A673 (cell line): ENCODE measurements at regions of chr4 and their contacts with region 1.

Region 1: GRCh38 chr4:174340714-174341113 is 57.0 kb downstream of the CEP44 start:
- DNase-seq: no peak
- H3K4me3 ChIP-seq: no peak overlapping the region
- H3K27ac ChIP-seq: peak overlapping the region; percentile 79
- H3K4me1 ChIP-seq: peaks cover 8% of the 10 kb centered on the region
- H3K27me3 ChIP-seq: no peaks in the 10 kb centered on the region
- CTCF ChIP-seq: no peak

Region 2: GRCh38 chr4:173019711-173020110 is 1321.0 kb before region 1 on chr4:
- CTCF ChIA-PET with region 1: no interaction called
- POLR2A ChIA-PET with region 1: no interaction called
- intact Hi-C with region 1: loop called (anchors 5 kb)
- DNase-seq: no peak
- H3K4me3 ChIP-seq: no peak overlapping the region
- H3K27ac ChIP-seq: peak overlapping the region; percentile 94
- H3K4me1 ChIP-seq: peaks cover 59% of the 10 kb centered on the region
- H3K27me3 ChIP-seq: no peaks in the 10 kb centered on the region
- CTCF ChIP-seq: no peak

Region 3: DNA sequence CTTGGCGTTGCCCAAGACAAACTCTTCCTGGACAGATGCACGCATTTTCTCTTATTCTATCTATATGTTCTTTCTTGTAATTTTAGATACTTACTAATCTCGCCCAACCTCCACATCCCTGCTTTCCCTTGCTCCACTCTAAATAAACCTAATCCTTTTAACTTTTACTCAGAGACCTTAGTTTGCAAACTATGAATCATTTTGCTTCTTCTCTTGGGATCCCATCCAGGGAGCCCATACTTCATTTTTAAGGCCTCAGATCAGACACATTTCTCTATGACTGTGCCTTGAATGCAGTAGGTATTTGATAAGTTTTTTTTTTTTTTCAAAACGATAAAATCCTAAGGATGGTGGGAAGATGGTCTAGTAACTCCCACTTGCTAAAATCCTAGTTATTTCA is 456.9 kb before region 1 on chr4:
- CTCF ChIA-PET with region 1: no interaction called
- POLR2A ChIA-PET with region 1: no interaction called
- intact Hi-C with region 1: loop called (anchors 5 kb)
- DNase-seq: peak; percentile 47
- H3K4me3 ChIP-seq: no peak overlapping the region
- H3K27ac ChIP-seq: no peak overlapping the region
- H3K4me1 ChIP-seq: peaks cover 56% of the 10 kb centered on the region
- H3K27me3 ChIP-seq: no peaks in the 10 kb centered on the region
- CTCF ChIP-seq: no peak